Activated CD4-positive, alpha-beta T cell treated with anti-CD3 and anti-CD28 coated beads, Interleukin-2, amount 10 ng/mL, durations not matched to agents 7 days and 5 days (primary cell): ENCODE measurements at regions of chr3 and their contacts with region 1.

Region 1: DNA sequence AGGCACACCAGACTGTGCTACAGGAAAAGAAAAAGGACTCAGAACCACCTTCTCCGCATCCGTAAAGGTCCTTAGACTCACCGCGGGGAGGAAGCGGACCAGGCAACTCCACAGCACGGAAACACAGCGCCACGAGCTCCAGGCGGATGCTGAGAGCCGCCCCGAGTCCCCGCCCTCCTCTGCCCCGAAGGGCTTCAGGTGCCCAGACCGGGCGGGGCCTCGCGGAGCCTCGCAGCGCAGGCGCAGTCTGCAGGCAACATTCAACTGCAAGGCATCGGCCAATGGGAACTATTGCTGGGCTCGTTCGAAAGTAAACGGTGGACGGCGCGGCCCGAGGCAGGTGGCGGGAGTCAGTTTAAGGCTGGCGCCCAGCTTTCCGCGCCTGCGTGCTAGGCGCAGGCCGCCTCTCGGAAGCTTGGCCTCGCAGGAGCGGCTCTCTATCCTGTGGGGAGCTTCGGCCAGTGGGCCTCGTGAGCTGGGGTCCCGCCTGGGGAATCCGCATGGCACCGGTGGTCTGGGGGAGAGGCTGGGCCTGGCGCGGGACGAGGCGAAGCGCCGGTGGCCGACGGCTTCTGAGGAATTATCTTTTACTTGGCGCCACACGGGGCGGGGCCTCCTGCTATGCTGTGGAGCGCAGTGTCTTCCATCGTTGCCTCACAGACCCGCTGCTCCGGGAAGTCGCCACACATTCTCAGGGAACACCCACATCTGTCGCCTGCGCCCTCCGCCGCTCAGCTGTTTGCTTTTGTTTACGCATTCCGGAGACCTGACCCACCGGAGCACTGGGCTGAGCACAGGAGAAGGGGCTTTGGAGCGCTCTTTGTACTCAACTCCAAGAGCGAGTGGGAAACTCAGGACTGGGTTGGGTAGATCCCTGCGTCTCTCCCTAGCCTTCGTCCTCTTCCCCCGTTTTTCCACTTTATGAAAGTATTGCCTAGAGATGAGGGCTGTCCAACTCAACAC is at the start of gene TRIM59:
- DNase-seq: peak; percentile 99
- H3K4me3 Mint-ChIP-seq: peak within 1 kb of the TSS; percentile 93
- H3K27ac Mint-ChIP-seq: peak within 1 kb of the TSS; percentile 98
- H3K4me1 Mint-ChIP-seq: peaks cover 38% of the 10 kb centered on the region
- H3K27me3 Mint-ChIP-seq: no peaks in the 10 kb centered on the region
- total RNA-seq, gene TRIM59: 58.2 to 79.8 TPM

Region 2: GRCh38 chr3:160399125-160400029 is 50.5 kb before region 1 on chr3 and contains the starts of genes IFT80 and SMC4:
- CTCF ChIA-PET with region 1: interaction called, 5 read pairs
- POLR2A ChIA-PET with region 1: interaction called, 21 read pairs
- DNase-seq: peak; percentile 97
- H3K4me3 Mint-ChIP-seq: peak within 1 kb of the TSS; percentile 89
- H3K27ac Mint-ChIP-seq: peak within 1 kb of the TSS; percentile 99
- H3K4me1 Mint-ChIP-seq: peaks cover 47% of the 10 kb centered on the region
- H3K27me3 Mint-ChIP-seq: no peaks in the 10 kb centered on the region
- total RNA-seq, gene IFT80: 30.9 to 35.0 TPM
- total RNA-seq, gene SMC4: 282 to 309 TPM